Activated CD4-positive, alpha-beta T cell treated with anti-CD3 and anti-CD28 coated beads for 36 hours (primary cell): ENCODE measurements at regions of chr4 and their contacts with region 1.

Region 1: GRCh38 chr4:26885912-26886274 is 25.3 kb downstream of the STIM2 start:
- DNase-seq: peak; percentile 29
- ATAC-seq: peak; percentile 63
- H3K4me3 Mint-ChIP-seq: peak overlapping the region; percentile 67
- H3K27ac Mint-ChIP-seq: peak overlapping the region; percentile 92
- H3K4me1 Mint-ChIP-seq: peaks cover 64% of the 10 kb centered on the region
- H3K27me3 Mint-ChIP-seq: no peaks in the 10 kb centered on the region

Region 2: GRCh38 chr4:26873391-26874026 is 12.4 kb before region 1 on chr4:
- CTCF ChIA-PET with region 1: interaction called, 6 read pairs
- POLR2A ChIA-PET with region 1: interaction called, 7 read pairs
- intact Hi-C with region 1: loop called (anchors 1 to 2 kb)
- DNase-seq: peak; percentile 77
- ATAC-seq: peak; percentile 94
- H3K4me3 Mint-ChIP-seq: peak overlapping the region; percentile 4
- H3K27ac Mint-ChIP-seq: peak overlapping the region; percentile 83
- H3K4me1 Mint-ChIP-seq: peaks cover 80% of the 10 kb centered on the region
- H3K27me3 Mint-ChIP-seq: no peaks in the 10 kb centered on the region

Region 3: GRCh38 chr4:26899991-26900390 is 14.1 kb after region 1 on chr4:
- CTCF ChIA-PET with region 1: interaction called, 18 read pairs
- POLR2A ChIA-PET with region 1: no interaction called
- intact Hi-C with region 1: loop called in 1 of 2 experiments (anchors 2 kb)
- DNase-seq: no peak
- ATAC-seq: no peak
- H3K4me3 Mint-ChIP-seq: no peak overlapping the region
- H3K27ac Mint-ChIP-seq: no peak overlapping the region
- H3K4me1 Mint-ChIP-seq: peaks cover 66% of the 10 kb centered on the region
- H3K27me3 Mint-ChIP-seq: no peaks in the 10 kb centered on the region

Region 4: DNA sequence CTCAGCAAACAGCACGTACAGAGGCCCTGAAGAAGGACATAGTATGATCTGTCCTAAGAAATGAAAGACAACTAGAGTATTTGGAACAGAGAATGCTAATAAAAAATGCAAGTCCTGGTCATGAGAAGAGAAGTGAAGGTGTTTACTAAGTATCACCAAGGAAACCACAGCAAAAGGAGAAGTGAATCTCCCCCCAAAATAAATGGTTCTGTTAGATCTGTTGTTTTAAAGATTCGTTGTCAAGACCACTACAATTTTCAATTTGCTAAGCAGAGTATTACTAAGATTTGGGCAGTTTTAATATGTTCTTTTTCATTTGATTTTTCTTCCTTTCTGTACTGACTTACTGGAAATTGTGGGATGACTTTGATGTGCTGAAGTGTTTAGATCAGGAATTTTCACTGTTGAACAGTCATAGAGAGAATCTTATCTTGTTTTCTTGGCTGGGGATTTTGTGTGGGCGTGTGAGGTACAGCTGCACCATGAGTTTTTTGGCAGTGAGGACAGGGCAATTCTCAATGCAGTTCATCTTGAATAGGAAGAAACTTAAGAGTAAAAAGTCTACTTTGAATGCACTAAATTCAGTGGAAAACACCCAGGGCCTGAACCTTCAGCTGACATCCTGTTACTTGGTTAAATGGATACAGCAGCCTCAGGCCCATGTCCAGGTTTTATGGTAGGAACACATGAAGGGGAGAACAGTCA is 106.9 kb after region 1 on chr4:
- CTCF ChIA-PET with region 1: interaction called, 6 read pairs
- POLR2A ChIA-PET with region 1: interaction called, 3 read pairs
- intact Hi-C with region 1: loop called in 1 of 2 experiments (anchors 2 kb)
- DNase-seq: peak; percentile 53
- ATAC-seq: peak; percentile 59
- H3K4me3 Mint-ChIP-seq: no peak overlapping the region
- H3K27ac Mint-ChIP-seq: no peak overlapping the region
- H3K4me1 Mint-ChIP-seq: peaks cover 23% of the 10 kb centered on the region
- H3K27me3 Mint-ChIP-seq: no peaks in the 10 kb centered on the region

Region 5: GRCh38 chr4:27684610-27685011 is 798.7 kb after region 1 on chr4:
- CTCF ChIA-PET with region 1: no interaction called
- POLR2A ChIA-PET with region 1: no interaction called
- intact Hi-C with region 1: no loop called
- DNase-seq: peak; percentile 48
- ATAC-seq: no peak
- H3K4me3 Mint-ChIP-seq: no peak overlapping the region
- H3K27ac Mint-ChIP-seq: no peak overlapping the region
- H3K4me1 Mint-ChIP-seq: no peaks in the 10 kb centered on the region
- H3K27me3 Mint-ChIP-seq: no peaks in the 10 kb centered on the region